ENCODE measurements at regions of chr1 and their contacts with region 1.

Region 1: DNA sequence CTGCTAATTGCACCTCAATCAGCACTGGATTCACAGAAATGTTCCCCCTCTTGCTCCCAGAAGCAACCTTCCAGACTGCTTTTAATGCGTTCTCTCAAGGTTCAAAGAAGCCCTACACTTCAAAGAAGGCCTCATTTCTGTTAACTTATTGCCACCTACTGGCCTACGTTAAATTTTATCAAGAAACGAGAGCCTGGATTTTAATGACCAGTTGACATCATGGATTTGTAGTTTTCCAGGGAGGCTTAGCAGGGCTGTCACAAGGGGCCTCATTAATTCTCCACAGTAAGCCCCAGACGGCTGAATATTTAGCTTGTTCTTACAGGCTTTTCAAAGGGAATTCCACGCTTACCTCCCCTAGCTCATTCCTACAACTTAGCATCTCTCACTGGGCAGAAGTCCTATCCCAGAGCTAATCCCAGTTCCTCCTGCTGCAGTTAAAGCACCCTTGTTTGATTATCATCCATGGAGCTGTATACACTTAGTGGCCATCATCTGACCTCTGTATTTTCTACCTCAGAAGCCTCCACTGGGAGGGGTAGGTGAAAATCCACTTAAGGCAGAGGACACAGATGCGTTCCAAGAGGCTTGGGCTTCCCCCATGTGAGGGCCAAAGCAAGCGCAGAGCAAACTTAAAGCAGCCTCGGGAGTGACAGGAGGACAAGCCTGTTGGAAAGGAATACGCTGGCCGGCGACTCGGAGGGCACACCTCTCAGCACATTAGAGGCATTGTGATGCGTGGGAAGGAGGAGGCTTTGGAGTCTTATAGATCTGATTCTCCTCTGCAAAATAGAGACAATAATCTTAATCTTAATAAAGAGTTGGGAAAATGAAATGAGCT is 32.2 kb upstream of the CYP4X1 start:
- DNase-seq: no peak
- H3K4me3 ChIP-seq: no peak overlapping the region
- H3K27ac ChIP-seq: no peak overlapping the region
- H3K4me1 ChIP-seq: no peaks in the 10 kb centered on the region
- H3K27me3 ChIP-seq: no peaks in the 10 kb centered on the region
- CTCF ChIP-seq: peak; percentile 36

Region 2: DNA sequence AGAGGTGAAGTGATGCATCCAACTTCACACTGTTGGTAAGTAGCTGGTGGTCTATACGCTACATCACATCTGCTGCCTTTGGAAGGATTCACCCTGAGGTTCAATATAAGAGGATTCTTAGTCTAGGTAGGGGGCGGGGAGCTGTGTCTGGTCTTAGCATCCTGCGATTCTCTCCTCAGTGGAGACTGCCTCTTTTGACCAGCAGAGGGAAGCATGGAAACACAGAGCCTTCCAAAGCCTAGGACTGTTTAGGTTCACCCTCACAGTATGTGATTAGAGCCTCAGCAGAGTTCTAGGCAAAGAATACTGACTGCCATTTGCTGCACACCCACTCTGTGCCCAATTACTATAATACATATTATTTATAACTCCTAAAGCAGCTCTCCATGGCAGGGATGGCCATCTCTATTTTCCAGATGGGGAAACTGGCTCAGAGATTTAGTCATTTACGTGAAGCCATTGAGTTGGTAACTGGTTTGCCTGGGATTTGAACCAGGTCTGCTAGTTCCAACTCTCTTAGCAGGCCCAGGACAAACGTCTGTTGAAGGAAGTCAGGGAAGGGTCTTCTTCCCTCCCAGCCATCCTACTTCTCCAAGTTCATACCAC is 243.5 kb before region 1 on chr1:
- intact Hi-C with region 1: loop called (anchors 10 kb)
- DNase-seq: no peak
- H3K4me3 ChIP-seq: no peak overlapping the region
- H3K27ac ChIP-seq: no peak overlapping the region
- H3K4me1 ChIP-seq: peaks cover 18% of the 10 kb centered on the region
- H3K27me3 ChIP-seq: peaks cover 45% of the 10 kb centered on the region
- CTCF ChIP-seq: peak; percentile 88

Measured in left ventricle myocardium inferior (tissue), 1 donor.